ENCODE measurements at regions of chr2 and their contacts with region 1.

Region 1: GRCh38 chr2:133886735-133887660 is 318.7 kb upstream of the NCKAP5 start:
- DNase-seq: peak; percentile 54
- H3K4me3 ChIP-seq: no peak overlapping the region
- H3K27ac ChIP-seq: no peak overlapping the region
- H3K4me1 ChIP-seq: peaks cover 0 to 6% (median 2%) of the 10 kb centered on the region in 4 donors
- H3K27me3 ChIP-seq: no peaks in the 10 kb centered on the region
- CTCF ChIP-seq: peak; percentile 37 to 57 (median 48)
- EP300 ChIP-seq: no peak
- POLR2A ChIP-seq: no peak

Region 2: DNA sequence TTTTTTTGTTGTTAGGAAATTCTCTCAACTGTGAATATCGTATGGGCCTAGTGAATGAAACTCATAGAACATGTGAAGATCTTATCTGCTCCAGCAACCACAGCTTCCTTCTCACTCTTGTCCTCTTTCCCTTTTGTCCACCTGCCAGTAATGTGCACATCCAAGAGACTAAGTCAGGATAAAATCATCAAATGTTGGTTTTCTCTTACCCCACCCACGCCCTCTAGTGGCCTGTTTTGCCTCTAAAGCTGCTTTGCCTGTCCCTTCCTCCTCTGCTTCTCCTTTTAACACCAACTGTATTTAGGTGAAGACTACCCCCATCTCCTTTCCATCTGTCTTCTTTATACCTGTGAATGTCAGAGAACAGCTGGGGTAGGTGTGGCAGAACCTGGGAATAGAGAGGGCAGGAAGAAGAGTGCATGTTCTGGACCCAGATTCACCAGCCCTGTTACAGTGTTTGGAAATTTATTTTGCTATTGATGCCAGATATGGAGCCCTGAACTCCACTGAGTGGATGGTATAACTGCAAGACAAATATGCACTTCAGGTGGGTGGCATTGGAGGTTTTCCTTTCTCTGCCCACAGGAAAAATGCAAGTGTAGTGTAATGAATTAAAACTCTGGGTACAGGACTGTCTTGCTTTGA is 358.5 kb after region 1 on chr2:
- in situ Hi-C with region 1: loop called in 1 of 4 experiments (anchors 25 kb)
- intact Hi-C with region 1: no loop called
- DNase-seq: peak; percentile 84
- H3K4me3 ChIP-seq: no peak overlapping the region
- H3K27ac ChIP-seq: no peak overlapping the region
- H3K4me1 ChIP-seq: peaks cover 0 to 36% (median 10%) of the 10 kb centered on the region in 4 donors
- H3K27me3 ChIP-seq: no peaks in the 10 kb centered on the region
- CTCF ChIP-seq: peak; percentile 66 to 75 (median 70)
- EP300 ChIP-seq: no peak
- POLR2A ChIP-seq: no peak

Region 3: GRCh38 chr2:134411828-134412638 is 525.0 kb after region 1 on chr2:
- in situ Hi-C with region 1: loop called in 1 of 4 experiments (anchors 25 kb)
- intact Hi-C with region 1: no loop called
- DNase-seq: peak; percentile 72
- H3K4me3 ChIP-seq: no peak overlapping the region
- H3K27ac ChIP-seq: peak overlapping the region in 3 of 4 donors; percentile 11 to 18 (median 14)
- H3K4me1 ChIP-seq: peaks cover 10 to 38% (median 19%) of the 10 kb centered on the region in 4 donors
- H3K27me3 ChIP-seq: no peaks in the 10 kb centered on the region
- CTCF ChIP-seq: peak; percentile 53 to 75 (median 59)
- EP300 ChIP-seq: no peak
- POLR2A ChIP-seq: no peak

Region 4: DNA sequence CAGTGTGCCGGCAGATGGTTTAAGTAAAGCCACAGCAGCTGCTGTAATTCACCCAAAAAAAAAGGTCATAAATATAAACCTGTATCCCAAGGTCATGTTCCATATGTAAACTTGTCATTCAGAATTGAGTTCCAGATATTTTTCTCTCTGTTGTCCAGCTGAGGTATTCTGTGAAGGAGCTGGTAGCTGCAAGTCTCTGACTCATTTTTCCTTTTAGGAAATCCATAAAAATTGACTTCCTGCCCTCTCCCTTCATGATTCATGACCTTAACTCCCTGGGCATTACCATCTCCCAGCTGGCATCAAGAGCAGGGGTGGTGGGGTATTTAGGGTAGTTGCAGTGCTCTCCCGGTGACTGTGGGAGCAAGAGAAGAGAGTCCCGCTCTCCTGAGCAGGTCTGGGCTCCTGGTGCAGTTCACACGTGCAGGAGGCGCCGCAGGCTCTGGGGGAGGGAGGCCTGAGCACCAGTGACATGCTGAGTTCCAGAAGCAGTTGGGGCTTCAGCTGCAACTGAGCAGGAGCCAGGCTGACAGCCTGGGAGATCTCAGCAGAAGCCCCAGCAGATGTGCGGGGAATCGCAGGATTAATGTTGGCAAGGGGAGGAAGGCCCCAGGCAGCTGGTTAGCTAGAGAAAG is 559.5 kb after region 1 on chr2:
- in situ Hi-C with region 1: loop called in 1 of 4 experiments (anchors 25 kb)
- intact Hi-C with region 1: no loop called
- DNase-seq: no peak
- H3K4me3 ChIP-seq: no peak overlapping the region
- H3K27ac ChIP-seq: no peak overlapping the region
- H3K4me1 ChIP-seq: no peaks in the 10 kb centered on the region
- H3K27me3 ChIP-seq: no peaks in the 10 kb centered on the region
- CTCF ChIP-seq: no peak
- EP300 ChIP-seq: no peak
- POLR2A ChIP-seq: no peak